B cell (primary cell): ENCODE measurements at regions of chr17 and their contacts with region 1.

Region 1: DNA sequence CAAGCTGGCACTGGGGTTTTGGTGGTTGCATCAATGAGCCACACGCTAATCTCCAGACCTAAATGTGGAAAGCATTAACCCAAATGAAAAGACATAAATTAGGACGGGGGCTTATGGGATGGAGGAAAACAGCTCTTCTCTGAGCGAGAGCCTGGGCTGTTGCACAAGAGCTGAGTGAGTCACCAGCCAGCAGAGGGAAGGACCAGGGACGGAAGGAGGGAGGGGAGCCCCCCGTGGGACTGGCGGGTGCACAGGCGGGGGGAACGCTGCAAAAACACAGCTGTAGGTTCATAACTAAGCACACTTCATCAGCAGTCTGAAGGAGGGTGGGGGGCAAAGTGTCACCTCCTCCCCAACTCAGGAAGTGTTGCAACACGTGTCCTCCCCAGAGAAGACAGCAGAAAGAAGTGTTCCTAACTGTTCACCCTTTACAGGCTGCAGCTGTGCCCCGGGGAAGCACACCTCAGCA is 83.3 kb downstream of the GAS7 start:
- DNase-seq: peak; percentile 69
- ATAC-seq: peak; percentile 82
- H3K4me3 ChIP-seq: peak overlapping the region; percentile 1 to 56 (median 24)
- H3K4me3 Mint-ChIP-seq: peak overlapping the region; percentile 58
- H3K27ac ChIP-seq: peak overlapping the region; percentile 75 to 82
- H3K27ac Mint-ChIP-seq: peak overlapping the region; percentile 91
- H3K4me1 ChIP-seq: peaks cover 55 to 59% of the 10 kb centered on the region in 2 donors
- H3K4me1 Mint-ChIP-seq: peaks cover 67% of the 10 kb centered on the region
- H3K27me3 ChIP-seq: no peaks in the 10 kb centered on the region
- H3K27me3 Mint-ChIP-seq: no peaks in the 10 kb centered on the region
- CTCF ChIP-seq: no peak

Region 2: GRCh38 chr17:9959377-9959981 is 155.6 kb before region 1 on chr17:
- CTCF ChIA-PET with region 1: no interaction called
- POLR2A ChIA-PET with region 1: no interaction called
- intact Hi-C with region 1: loop called (anchors 2 kb)
- DNase-seq: no peak
- ATAC-seq: no peak
- H3K4me3 ChIP-seq: no peak overlapping the region
- H3K4me3 Mint-ChIP-seq: no peak overlapping the region
- H3K27ac ChIP-seq: no peak overlapping the region
- H3K27ac Mint-ChIP-seq: no peak overlapping the region
- H3K4me1 ChIP-seq: no peaks in the 10 kb centered on the region
- H3K4me1 Mint-ChIP-seq: no peaks in the 10 kb centered on the region
- H3K27me3 ChIP-seq: peaks cover 0 to 4% (median 0%) of the 10 kb centered on the region in 4 experiments
- H3K27me3 Mint-ChIP-seq: peaks cover 6% of the 10 kb centered on the region
- CTCF ChIP-seq: no peak

Region 3: GRCh38 chr17:10050597-10051101 is 64.5 kb before region 1 on chr17:
- CTCF ChIA-PET with region 1: interaction called, 5 read pairs
- POLR2A ChIA-PET with region 1: interaction called, 4 read pairs
- intact Hi-C with region 1: loop called (anchors 2 kb)
- DNase-seq: peak; percentile 27
- ATAC-seq: no peak
- H3K4me3 ChIP-seq: no peak overlapping the region
- H3K4me3 Mint-ChIP-seq: peak overlapping the region; percentile 44
- H3K27ac ChIP-seq: no peak overlapping the region
- H3K27ac Mint-ChIP-seq: peak overlapping the region; percentile 47
- H3K4me1 ChIP-seq: peaks cover 33 to 48% of the 10 kb centered on the region in 2 donors
- H3K4me1 Mint-ChIP-seq: peaks cover 53% of the 10 kb centered on the region
- H3K27me3 ChIP-seq: peaks cover 0 to 4% (median 0%) of the 10 kb centered on the region in 4 experiments
- H3K27me3 Mint-ChIP-seq: no peaks in the 10 kb centered on the region
- CTCF ChIP-seq: no peak

Region 4: DNA sequence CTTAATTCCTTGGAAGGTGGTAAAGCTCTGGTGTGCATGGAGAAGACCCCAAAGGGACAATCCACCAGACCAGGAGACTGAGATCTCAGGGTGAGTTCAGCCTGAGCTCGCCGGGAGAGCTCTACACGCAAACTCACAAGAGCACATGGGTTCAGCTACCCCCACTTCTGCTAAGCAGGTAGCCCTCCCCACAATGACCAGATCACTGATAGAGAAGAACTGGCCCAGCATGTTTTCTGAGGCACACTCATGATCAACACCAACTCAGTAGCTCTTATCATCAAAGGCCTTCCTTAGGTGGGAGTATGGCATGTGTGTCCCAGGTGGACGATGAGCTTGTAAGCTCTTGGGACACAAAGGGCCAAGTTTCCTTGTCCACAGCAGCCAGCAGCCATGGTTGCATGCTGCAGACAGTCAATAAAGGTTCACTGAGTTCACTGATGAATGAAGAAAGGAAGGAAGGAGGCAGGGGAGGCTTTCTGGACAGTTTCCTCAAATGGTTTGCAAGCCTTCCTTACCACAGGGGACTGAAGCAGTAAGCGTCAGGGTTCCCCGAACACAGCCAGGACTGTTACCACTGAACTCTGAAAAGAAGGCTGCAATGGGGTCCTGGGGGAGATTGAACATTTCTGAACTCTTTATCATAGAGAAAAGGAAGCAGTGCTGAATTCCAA is 27.9 kb before region 1 on chr17:
- CTCF ChIA-PET with region 1: no interaction called
- POLR2A ChIA-PET with region 1: interaction called, 12 read pairs
- intact Hi-C with region 1: no loop called
- DNase-seq: peak; percentile 21
- ATAC-seq: peak; percentile 21
- H3K4me3 ChIP-seq: no peak overlapping the region
- H3K4me3 Mint-ChIP-seq: no peak overlapping the region
- H3K27ac ChIP-seq: no peak overlapping the region
- H3K27ac Mint-ChIP-seq: peak overlapping the region; percentile 41
- H3K4me1 ChIP-seq: peaks cover 15 to 23% of the 10 kb centered on the region in 2 donors
- H3K4me1 Mint-ChIP-seq: peaks cover 22% of the 10 kb centered on the region
- H3K27me3 ChIP-seq: no peaks in the 10 kb centered on the region
- H3K27me3 Mint-ChIP-seq: peaks cover 8% of the 10 kb centered on the region
- CTCF ChIP-seq: no peak

Region 5: DNA sequence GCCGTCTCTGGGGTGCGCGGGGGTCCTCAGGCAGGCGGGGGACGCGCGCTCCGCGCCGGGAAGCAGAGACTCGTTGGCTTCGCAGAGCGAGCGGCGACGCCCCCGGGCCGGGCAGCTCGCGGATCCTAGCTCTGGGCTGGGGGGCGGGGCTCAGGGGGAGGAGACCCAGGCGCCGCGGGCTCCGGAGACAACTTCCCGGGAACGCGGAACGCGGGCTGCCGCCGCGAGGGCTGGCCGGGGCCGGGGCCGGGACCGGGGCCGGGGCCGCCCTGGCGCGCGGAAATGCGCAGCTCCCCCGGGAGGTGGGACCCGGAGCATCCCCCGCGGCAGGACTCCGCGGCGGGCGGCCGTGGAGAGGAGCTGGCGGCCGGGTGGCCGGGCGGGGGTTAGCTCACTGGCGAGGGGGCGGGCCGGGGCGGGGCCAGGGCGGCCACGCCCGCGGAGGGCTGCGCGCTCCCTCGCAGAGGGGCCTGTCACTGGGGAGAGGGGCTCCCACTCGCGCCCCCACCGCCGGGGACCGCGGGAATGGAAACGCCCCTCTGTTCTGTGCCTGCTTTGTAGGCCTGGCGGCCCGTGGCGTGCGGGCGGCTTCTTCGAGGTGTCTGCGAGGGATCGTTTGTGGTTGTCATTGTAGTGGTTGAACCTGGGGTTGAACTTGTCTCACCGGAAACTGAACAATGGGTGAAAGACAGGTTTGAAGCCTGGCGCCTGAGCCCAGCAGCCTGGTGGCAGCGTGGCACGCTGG is 83.6 kb after region 1 on chr17 and contains the start of gene GAS7:
- CTCF ChIA-PET with region 1: interaction called, 3 read pairs
- POLR2A ChIA-PET with region 1: no interaction called
- intact Hi-C with region 1: loop called (anchors 2 kb)
- DNase-seq: peak; percentile 46
- ATAC-seq: peak; percentile 72
- H3K4me3 ChIP-seq: peak within 1 kb of the TSS; percentile 31 to 61 (median 53)
- H3K4me3 Mint-ChIP-seq: peak within 1 kb of the TSS; percentile 86
- H3K27ac ChIP-seq: no peak within 1 kb of the TSS
- H3K27ac Mint-ChIP-seq: peak within 1 kb of the TSS; percentile 59
- H3K4me1 ChIP-seq: peaks cover 4 to 11% of the 10 kb centered on the region in 2 donors
- H3K4me1 Mint-ChIP-seq: peaks cover 18% of the 10 kb centered on the region
- H3K27me3 ChIP-seq: peaks cover 0 to 20% (median 8%) of the 10 kb centered on the region in 4 experiments
- H3K27me3 Mint-ChIP-seq: peaks cover 33% of the 10 kb centered on the region
- CTCF ChIP-seq: no peak
- total RNA-seq, gene GAS7: 13.6 and 15.6 TPM in 2 replicates

Region 6: DNA sequence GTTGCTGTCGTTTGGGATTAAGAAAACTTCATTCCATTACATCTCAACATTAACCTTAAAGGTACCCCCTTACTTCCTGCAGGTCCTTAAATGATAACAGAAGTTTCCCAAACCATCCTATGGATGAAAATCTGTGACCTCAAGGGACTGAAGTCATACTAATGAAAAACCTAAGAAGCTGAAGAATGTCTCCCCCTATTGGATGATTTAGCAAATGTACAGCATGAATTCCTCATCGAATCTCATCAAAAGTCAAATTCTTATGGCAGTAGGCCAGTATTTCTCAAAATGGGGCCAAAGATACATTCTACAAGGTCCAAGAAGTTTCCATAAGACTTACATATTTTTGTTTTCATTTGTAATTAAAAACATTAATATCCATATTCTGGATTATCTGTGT is 568.7 kb after region 1 on chr17:
- CTCF ChIA-PET with region 1: no interaction called
- POLR2A ChIA-PET with region 1: no interaction called
- intact Hi-C with region 1: no loop called
- DNase-seq: peak; percentile 27
- ATAC-seq: no peak
- H3K4me3 ChIP-seq: no peak overlapping the region
- H3K4me3 Mint-ChIP-seq: no peak overlapping the region
- H3K27ac ChIP-seq: no peak overlapping the region
- H3K27ac Mint-ChIP-seq: no peak overlapping the region
- H3K4me1 ChIP-seq: no peaks in the 10 kb centered on the region
- H3K4me1 Mint-ChIP-seq: peaks cover 5% of the 10 kb centered on the region
- H3K27me3 ChIP-seq: no peaks in the 10 kb centered on the region
- H3K27me3 Mint-ChIP-seq: no peaks in the 10 kb centered on the region
- CTCF ChIP-seq: peak; percentile 67